ENCODE measurements at regions of chr19 and their contacts with region 1.

Region 1: DNA sequence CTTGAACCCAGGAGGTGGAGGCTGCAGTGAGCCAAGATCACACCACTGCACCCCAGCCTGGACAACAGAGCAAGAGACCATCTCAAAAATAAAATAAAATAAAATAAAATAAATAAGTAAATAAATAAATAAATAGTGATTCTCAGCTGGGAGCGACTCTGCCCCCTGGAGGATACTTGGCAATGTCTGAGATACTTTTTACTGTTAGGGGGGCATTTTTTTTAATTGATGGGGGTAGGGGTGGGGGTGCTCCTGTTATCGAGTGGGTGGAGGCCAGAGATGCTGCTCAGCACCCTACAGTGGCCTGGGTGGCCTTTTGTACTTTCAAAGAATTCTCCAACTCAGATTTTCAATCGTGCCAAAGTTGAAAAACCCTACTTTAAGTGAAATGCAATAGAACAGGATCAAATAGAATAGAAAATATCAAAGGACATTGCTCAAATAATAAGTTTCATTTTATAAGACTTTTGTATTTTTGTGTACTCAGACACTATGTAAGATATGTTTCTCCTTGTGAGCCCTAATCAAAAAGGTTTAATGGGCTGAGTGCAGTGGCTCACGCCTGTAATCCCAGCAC is 7.1 kb upstream of the CLPP start:
- DNase-seq: no peak
- H3K4me3 Mint-ChIP-seq: no peak overlapping the region
- H3K27ac Mint-ChIP-seq: no peak overlapping the region
- H3K4me1 Mint-ChIP-seq: peaks cover 9% of the 10 kb centered on the region
- H3K27me3 Mint-ChIP-seq: peaks cover 8% of the 10 kb centered on the region
- CTCF ChIP-seq: peak; percentile 48

Region 2: GRCh38 chr19:6161271-6161850 is 192.8 kb before region 1 on chr19:
- CTCF ChIA-PET with region 1: no interaction called
- intact Hi-C with region 1: loop called (anchors 10 kb)
- DNase-seq: peak; percentile 1
- H3K4me3 Mint-ChIP-seq: no peak overlapping the region
- H3K27ac Mint-ChIP-seq: no peak overlapping the region
- H3K4me1 Mint-ChIP-seq: no peaks in the 10 kb centered on the region
- H3K27me3 Mint-ChIP-seq: peaks cover 12% of the 10 kb centered on the region
- CTCF ChIP-seq: no peak

Region 3: DNA sequence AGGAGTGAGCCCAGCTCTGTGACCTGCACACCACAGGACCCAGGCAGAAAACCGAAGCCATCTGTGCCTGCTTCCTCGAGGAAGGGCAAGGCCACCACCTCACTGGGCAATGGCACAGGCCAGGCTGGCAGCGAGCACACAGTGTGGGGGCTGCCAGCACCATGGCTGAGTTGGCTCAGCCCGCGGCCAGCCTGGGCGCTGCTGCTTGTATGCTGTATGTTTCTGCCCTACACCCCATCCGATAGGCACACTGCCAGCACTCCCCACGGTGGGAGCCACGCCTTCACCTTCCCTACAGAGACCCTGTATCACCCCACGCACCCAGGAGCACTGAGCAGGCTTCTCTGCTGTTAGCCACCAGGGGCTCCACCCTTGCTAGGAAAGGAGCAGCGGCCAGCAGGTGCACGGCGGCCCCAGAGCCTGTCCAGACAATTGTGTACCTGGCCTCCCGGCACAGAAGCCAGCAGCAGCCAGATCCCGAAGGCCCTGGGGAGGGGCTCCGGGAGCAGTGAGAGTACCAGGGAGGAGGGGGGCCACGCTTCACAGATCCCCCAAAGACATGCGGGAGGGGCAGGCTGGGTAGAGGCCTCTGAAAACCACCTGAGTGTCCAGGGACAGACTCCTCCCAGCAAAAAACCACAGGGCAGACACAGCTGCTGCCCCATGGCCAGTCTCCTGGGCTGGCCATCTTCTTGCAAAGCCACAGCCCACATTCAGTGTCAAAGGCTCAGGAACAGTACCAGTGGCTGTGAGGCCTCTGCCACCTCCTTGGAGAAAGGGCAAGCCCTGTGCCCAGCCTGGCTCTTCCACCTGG is 130.5 kb before region 1 on chr19:
- CTCF ChIA-PET with region 1: no interaction called
- intact Hi-C with region 1: no loop called
- DNase-seq: no peak
- H3K4me3 Mint-ChIP-seq: no peak overlapping the region
- H3K27ac Mint-ChIP-seq: no peak overlapping the region
- H3K4me1 Mint-ChIP-seq: no peaks in the 10 kb centered on the region
- H3K27me3 Mint-ChIP-seq: no peaks in the 10 kb centered on the region
- CTCF ChIP-seq: no peak

Region 4: GRCh38 chr19:6241680-6242377 is 112.4 kb before region 1 on chr19:
- CTCF ChIA-PET with region 1: no interaction called
- intact Hi-C with region 1: no loop called
- DNase-seq: no peak
- H3K4me3 Mint-ChIP-seq: no peak overlapping the region
- H3K27ac Mint-ChIP-seq: no peak overlapping the region
- H3K4me1 Mint-ChIP-seq: peaks cover 23% of the 10 kb centered on the region
- H3K27me3 Mint-ChIP-seq: no peaks in the 10 kb centered on the region
- CTCF ChIP-seq: no peak

Region 5: DNA sequence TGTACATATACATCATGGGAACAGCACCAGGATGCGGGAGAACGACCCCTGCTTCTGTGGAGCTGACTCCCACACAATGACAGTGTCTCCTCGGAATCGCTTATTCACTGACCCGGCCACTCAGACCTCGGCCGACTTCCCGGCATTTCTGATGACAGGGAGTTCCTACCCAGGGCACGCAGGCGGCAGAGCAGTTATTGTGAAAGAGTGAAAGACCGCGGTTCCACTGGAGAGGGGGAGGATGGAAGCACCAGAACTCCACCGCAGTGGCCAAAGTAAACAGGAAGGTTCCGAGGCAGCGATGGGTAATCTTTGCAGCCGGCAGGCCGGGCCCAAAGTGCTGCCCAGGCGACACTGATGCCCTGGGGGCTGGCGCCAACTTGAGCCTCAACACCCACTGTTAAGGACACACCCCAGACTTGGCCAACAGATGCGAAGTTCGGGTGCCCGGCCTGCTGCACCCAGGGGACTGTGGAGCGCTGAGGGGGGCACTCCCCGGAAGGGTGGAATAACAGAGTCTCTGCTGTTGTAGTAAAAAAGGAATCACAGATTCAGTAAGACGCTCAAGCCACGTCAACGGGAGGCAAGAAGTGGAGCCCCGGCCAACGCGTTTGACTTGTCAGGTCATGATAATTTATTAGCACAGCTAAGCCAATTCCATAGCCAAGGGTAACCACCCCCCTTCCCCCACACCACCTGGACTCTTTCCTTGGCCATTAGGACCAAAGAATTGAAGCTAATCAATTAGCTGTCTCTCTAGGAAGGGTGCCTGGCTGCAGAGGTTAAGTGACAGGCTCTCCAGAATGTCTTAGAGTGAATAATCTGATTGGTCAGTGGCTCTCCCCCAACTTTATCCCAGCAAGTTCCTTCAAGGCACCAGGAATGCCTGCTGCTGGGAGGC is 80.2 kb before region 1 on chr19:
- CTCF ChIA-PET with region 1: no interaction called
- intact Hi-C with region 1: no loop called
- DNase-seq: peak; percentile 26
- H3K4me3 Mint-ChIP-seq: peak overlapping the region; percentile 36
- H3K27ac Mint-ChIP-seq: no peak overlapping the region
- H3K4me1 Mint-ChIP-seq: peaks cover 29% of the 10 kb centered on the region
- H3K27me3 Mint-ChIP-seq: no peaks in the 10 kb centered on the region
- CTCF ChIP-seq: no peak

Region 6: GRCh38 chr19:6521718-6522646 is 167.8 kb after region 1 on chr19:
- CTCF ChIA-PET with region 1: interaction called, 10 read pairs
- intact Hi-C with region 1: no loop called
- DNase-seq: no peak
- H3K4me3 Mint-ChIP-seq: no peak overlapping the region
- H3K27ac Mint-ChIP-seq: no peak overlapping the region
- H3K4me1 Mint-ChIP-seq: peaks cover 16% of the 10 kb centered on the region
- H3K27me3 Mint-ChIP-seq: no peaks in the 10 kb centered on the region
- CTCF ChIP-seq: no peak